ENCODE measurements at regions of chr17 and their contacts with region 1.

Region 1: GRCh38 chr17:41648411-41649195 is 24.2 kb upstream of the KRT17 start:
- DNase-seq: peak; percentile 90
- ATAC-seq: peak; percentile 92
- H3K4me3 ChIP-seq: peak overlapping the region; percentile 23 to 74 (median 55)
- H3K4me3 Mint-ChIP-seq: peak overlapping the region; percentile 60
- H3K27ac ChIP-seq: peak overlapping the region in 1 of 2 donors; percentile 17
- H3K27ac Mint-ChIP-seq: peak overlapping the region; percentile 51
- H3K4me1 ChIP-seq: peaks cover 9 to 18% of the 10 kb centered on the region in 2 donors
- H3K4me1 Mint-ChIP-seq: peaks cover 12% of the 10 kb centered on the region
- H3K27me3 ChIP-seq: peaks cover 0 to 5% (median 1%) of the 10 kb centered on the region in 4 experiments
- H3K27me3 Mint-ChIP-seq: no peaks in the 10 kb centered on the region
- CTCF ChIP-seq: peak; percentile 74

Region 2: GRCh38 chr17:40803617-40804082 is 845.0 kb before region 1 on chr17:
- CTCF ChIA-PET with region 1: interaction called, 8 read pairs
- POLR2A ChIA-PET with region 1: no interaction called
- intact Hi-C with region 1: loop called (anchors 1 kb)
- DNase-seq: peak; percentile 79
- ATAC-seq: peak; percentile 93
- H3K4me3 ChIP-seq: no peak overlapping the region
- H3K4me3 Mint-ChIP-seq: no peak overlapping the region
- H3K27ac ChIP-seq: no peak overlapping the region
- H3K27ac Mint-ChIP-seq: no peak overlapping the region
- H3K4me1 ChIP-seq: peaks cover 0 to 4% of the 10 kb centered on the region in 2 donors
- H3K4me1 Mint-ChIP-seq: peaks cover 3% of the 10 kb centered on the region
- H3K27me3 ChIP-seq: peaks cover 0 to 47% (median 28%) of the 10 kb centered on the region in 4 experiments
- H3K27me3 Mint-ChIP-seq: peaks cover 48% of the 10 kb centered on the region
- CTCF ChIP-seq: peak; percentile 94

Region 3: GRCh38 chr17:40909351-40909750 is 739.3 kb before region 1 on chr17:
- CTCF ChIA-PET with region 1: interaction called, 21 read pairs
- POLR2A ChIA-PET with region 1: no interaction called
- intact Hi-C with region 1: loop called (anchors 1 kb)
- DNase-seq: peak; percentile 78
- ATAC-seq: peak; percentile 70
- H3K4me3 ChIP-seq: no peak overlapping the region
- H3K4me3 Mint-ChIP-seq: no peak overlapping the region
- H3K27ac ChIP-seq: no peak overlapping the region
- H3K27ac Mint-ChIP-seq: no peak overlapping the region
- H3K4me1 ChIP-seq: no peaks in the 10 kb centered on the region
- H3K4me1 Mint-ChIP-seq: no peaks in the 10 kb centered on the region
- H3K27me3 ChIP-seq: peaks cover 0 to 17% (median 5%) of the 10 kb centered on the region in 4 experiments
- H3K27me3 Mint-ChIP-seq: peaks cover 49% of the 10 kb centered on the region
- CTCF ChIP-seq: peak; percentile 76

Region 4: GRCh38 chr17:41548844-41549595 is 99.6 kb before region 1 on chr17:
- CTCF ChIA-PET with region 1: interaction called, 68 read pairs
- POLR2A ChIA-PET with region 1: no interaction called
- intact Hi-C with region 1: loop called (anchors 1 kb)
- DNase-seq: peak; percentile 78
- ATAC-seq: peak; percentile 80
- H3K4me3 ChIP-seq: peak overlapping the region in 2 of 5 experiments; percentile 5 to 15
- H3K4me3 Mint-ChIP-seq: peak overlapping the region; percentile 37
- H3K27ac ChIP-seq: no peak overlapping the region
- H3K27ac Mint-ChIP-seq: no peak overlapping the region
- H3K4me1 ChIP-seq: peaks cover 8 to 13% of the 10 kb centered on the region in 2 donors
- H3K4me1 Mint-ChIP-seq: peaks cover 8% of the 10 kb centered on the region
- H3K27me3 ChIP-seq: peaks cover 0 to 42% (median 7%) of the 10 kb centered on the region in 4 experiments
- H3K27me3 Mint-ChIP-seq: peaks cover 53% of the 10 kb centered on the region
- CTCF ChIP-seq: peak; percentile 93

Region 5: DNA sequence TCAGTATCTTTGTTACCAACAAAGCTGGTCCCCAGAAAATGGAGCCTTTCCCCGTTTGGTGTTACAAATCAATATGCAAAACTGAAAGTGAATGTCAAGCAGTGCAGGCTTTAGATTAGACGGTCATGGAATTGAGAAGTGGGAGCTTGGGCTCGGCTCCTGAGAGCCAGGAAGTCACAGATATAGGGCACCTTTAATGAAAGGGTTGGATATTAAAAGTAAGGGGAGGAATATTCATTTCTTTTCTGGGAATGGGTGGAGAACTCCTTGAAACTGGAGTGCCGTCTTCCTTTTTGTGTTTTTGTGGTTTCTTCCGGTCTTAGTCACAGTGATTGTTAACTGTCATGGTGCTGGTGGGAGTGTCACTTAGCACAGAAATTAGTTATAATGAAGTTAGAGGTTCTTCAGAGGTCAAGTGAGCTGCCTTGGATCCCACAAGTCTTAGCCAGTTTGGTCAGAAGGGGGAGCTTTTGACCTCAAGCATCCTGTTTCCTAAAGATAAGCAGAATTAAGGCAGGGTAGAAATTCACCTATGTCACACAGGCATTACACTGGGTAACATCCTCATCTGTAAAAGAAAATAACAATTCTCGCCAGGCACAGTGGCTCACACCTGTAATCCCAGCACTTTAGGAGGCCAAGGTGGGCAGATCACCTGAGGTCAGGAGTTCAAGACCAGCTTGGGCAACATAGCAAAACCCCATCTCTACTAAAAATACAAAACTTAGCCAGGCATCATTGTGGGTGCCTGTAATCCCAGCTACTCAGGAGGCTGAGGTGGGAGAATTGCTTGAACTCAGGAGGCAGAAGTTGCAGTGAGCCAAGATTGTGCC is 30.5 kb after region 1 on chr17:
- CTCF ChIA-PET with region 1: interaction called, 13 read pairs
- POLR2A ChIA-PET with region 1: no interaction called
- intact Hi-C with region 1: no loop called
- DNase-seq: peak; percentile 65
- ATAC-seq: peak; percentile 50
- H3K4me3 ChIP-seq: peak overlapping the region; percentile 17 to 51 (median 46)
- H3K4me3 Mint-ChIP-seq: peak overlapping the region; percentile 82
- H3K27ac ChIP-seq: peak overlapping the region; percentile 62 to 66
- H3K27ac Mint-ChIP-seq: peak overlapping the region; percentile 87
- H3K4me1 ChIP-seq: peaks cover 46 to 50% of the 10 kb centered on the region in 2 donors
- H3K4me1 Mint-ChIP-seq: peaks cover 37% of the 10 kb centered on the region
- H3K27me3 ChIP-seq: no peaks in the 10 kb centered on the region
- H3K27me3 Mint-ChIP-seq: no peaks in the 10 kb centered on the region
- CTCF ChIP-seq: no peak

Measured in B cell (primary cell).